B cell (primary cell): ENCODE measurements at regions of chr19 and their contacts with region 1.

Region 1: DNA sequence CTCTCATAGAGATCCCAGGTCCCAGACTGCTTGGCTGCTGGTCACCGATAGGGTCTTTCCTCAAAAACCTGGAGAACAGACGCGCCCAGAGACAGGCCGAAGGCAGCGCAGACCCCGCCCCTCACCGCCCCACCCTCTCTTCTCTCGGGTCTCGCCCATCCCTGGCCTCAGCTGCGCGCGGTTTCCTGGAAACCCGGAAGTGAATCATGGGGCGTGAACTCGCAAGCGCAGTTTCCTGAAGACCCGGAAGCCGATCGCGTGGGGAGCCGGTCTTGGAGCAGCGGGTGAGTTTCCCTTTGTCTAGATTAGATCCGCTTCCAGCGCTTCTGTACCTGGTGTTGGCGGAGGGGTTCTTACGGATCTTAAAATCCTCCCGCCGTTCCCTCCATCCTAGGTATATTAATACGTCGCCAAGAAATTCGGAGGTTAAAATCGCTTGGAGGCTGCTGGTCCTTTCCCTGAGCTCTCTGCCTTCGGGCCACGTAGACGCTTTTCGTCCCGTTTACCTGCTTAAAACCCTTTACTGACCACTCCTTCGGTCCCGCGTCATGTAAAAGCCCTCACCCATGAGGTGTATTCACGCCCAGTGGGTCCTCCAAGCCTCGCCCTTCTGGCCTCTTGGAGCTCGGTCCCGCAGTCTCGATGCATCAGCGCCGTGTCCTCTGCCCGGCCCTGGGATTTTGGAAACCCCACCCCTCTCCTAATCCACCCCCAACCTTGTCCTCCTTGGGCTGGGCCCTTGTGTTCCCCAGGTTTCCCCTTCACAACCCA is at the start of gene ZNF578:
- DNase-seq: peak; percentile 71
- ATAC-seq: peak; percentile 73
- H3K4me3 ChIP-seq: peak within 1 kb of the TSS; percentile 63 to 79 (median 69)
- H3K4me3 Mint-ChIP-seq: peak within 1 kb of the TSS; percentile 85
- H3K27ac ChIP-seq: peak within 1 kb of the TSS; percentile 30 to 55
- H3K27ac Mint-ChIP-seq: peak within 1 kb of the TSS; percentile 68
- H3K4me1 ChIP-seq: peaks cover 7 to 9% of the 10 kb centered on the region in 2 donors
- H3K4me1 Mint-ChIP-seq: peaks cover 12% of the 10 kb centered on the region
- H3K27me3 ChIP-seq: no peaks in the 10 kb centered on the region
- H3K27me3 Mint-ChIP-seq: no peaks in the 10 kb centered on the region
- CTCF ChIP-seq: no peak
- total RNA-seq, gene ZNF578: 3.7 and 5.6 TPM in 2 replicates

Region 2: DNA sequence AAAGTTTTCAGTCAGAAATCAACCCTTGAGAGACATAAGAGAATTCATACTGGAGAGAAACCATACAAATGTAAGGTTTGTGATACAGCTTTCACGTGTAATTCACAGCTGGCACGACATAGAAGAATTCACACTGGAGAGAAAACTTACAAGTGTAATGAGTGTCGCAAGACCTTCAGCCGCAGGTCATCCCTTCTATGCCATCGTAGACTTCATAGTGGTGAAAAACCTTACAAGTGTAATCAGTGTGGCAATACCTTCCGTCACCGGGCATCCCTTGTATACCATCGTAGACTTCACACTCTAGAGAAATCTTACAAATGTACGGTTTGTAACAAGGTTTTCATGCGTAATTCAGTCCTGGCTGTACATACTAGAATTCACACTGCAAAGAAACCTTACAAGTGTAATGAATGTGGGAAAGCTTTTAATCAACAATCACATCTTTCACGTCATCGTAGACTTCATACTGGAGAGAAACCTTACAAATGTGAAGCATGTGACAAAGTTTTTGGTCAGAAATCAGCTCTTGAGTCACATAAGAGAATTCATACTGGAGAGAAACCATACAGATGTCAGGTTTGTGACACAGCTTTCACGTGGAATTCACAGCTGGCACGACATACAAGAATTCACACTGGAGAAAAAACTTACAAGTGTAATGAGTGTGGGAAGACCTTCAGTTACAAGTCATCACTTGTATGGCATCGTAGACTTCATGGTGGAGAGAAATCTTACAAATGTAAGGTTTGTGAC is 100.9 kb after region 1 on chr19:
- CTCF ChIA-PET with region 1: no interaction called
- POLR2A ChIA-PET with region 1: no interaction called
- intact Hi-C with region 1: no loop called
- DNase-seq: no peak
- ATAC-seq: no peak
- H3K4me3 ChIP-seq: no peak overlapping the region
- H3K4me3 Mint-ChIP-seq: no peak overlapping the region
- H3K27ac ChIP-seq: no peak overlapping the region
- H3K27ac Mint-ChIP-seq: no peak overlapping the region
- H3K4me1 ChIP-seq: no peaks in the 10 kb centered on the region
- H3K4me1 Mint-ChIP-seq: no peaks in the 10 kb centered on the region
- H3K27me3 ChIP-seq: no peaks in the 10 kb centered on the region
- H3K27me3 Mint-ChIP-seq: no peaks in the 10 kb centered on the region
- CTCF ChIP-seq: no peak

Region 3: GRCh38 chr19:53461866-53462265 is 1008.4 kb after region 1 on chr19:
- CTCF ChIA-PET with region 1: no interaction called
- POLR2A ChIA-PET with region 1: interaction called, 16 read pairs
- intact Hi-C with region 1: no loop called
- DNase-seq: no peak
- ATAC-seq: no peak
- H3K4me3 ChIP-seq: no peak overlapping the region
- H3K4me3 Mint-ChIP-seq: no peak overlapping the region
- H3K27ac ChIP-seq: no peak overlapping the region
- H3K27ac Mint-ChIP-seq: no peak overlapping the region
- H3K4me1 ChIP-seq: peaks cover 3 to 4% of the 10 kb centered on the region in 2 donors
- H3K4me1 Mint-ChIP-seq: peaks cover 7% of the 10 kb centered on the region
- H3K27me3 ChIP-seq: peaks cover 0 to 27% (median 6%) of the 10 kb centered on the region in 4 experiments
- H3K27me3 Mint-ChIP-seq: peaks cover 18% of the 10 kb centered on the region
- CTCF ChIP-seq: no peak